Left cardiac atrium (tissue), 4 donors: ENCODE measurements at regions of chr2 and their contacts with region 1.

Region 1: GRCh38 chr2:109486711-109487535 is 126.8 kb downstream of the SEPTIN10 start:
- DNase-seq: no peak
- ATAC-seq: no peak

Region 2: GRCh38 chr2:109290887-109291643 is 195.9 kb before region 1 on chr2:
- intact Hi-C with region 1: loop called in 1 of 2 experiments (anchors 10 kb)
- DNase-seq: peak; percentile 49
- ATAC-seq: peak; percentile 61 to 66

Region 3: GRCh38 chr2:109558076-109558882 is 71.4 kb after region 1 on chr2:
- intact Hi-C with region 1: no loop called
- DNase-seq: no peak
- ATAC-seq: peak in 1 of 2 donors; percentile 41